OCI-LY7 (cell line): ENCODE measurements at regions of chr1 and their contacts with region 1.

Region 1: GRCh38 chr1:86395771-86396497 is at the start of gene ODF2L:
- DNase-seq: peak; percentile 88
- H3K4me3 ChIP-seq: peak within 1 kb of the TSS; percentile 83
- H3K27ac ChIP-seq: peak within 1 kb of the TSS; percentile 74
- H3K4me1 ChIP-seq: peaks cover 28% of the 10 kb centered on the region
- CTCF ChIP-seq: no peak
- total RNA-seq, gene ODF2L: 24.7 and 26.2 TPM in 2 replicates

Region 2: DNA sequence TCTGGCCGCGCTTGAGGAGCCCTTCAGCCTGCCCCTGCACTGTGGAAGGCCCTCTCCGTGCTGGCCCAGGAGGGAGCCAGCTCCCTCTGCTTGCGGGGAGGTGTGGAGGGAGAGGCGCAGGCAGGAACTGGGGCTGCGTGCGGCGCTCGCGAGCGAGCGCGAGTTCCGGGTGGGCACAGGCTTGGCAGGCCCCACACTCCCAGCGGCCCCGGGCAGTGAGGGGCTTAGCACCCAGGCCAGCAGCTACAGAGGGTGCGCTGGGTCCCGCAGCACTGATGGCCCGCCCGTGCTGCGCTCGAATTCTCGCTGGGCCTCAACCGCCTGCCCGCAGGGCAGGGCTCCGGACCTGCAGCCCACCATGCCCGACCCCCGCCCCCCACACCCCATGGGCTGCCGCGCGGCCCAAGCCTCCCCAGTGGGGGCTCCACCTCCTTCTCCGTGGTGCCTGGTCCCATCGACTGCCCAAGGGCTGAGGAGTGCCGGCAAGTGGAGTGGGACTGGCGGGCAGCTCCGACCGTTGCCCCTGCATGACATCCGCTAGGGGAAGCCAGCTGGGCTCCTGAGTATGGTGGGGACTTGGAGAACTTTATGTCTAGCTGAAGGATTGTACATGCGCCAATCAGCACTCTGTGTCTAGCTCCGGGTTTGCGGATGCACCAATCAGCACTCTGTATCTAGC is 285.3 kb before region 1 on chr1:
- CTCF ChIA-PET with region 1: no interaction called
- POLR2A ChIA-PET with region 1: no interaction called
- intact Hi-C with region 1: no loop called
- DNase-seq: no peak
- H3K4me3 ChIP-seq: no peak overlapping the region
- H3K27ac ChIP-seq: no peak overlapping the region
- H3K4me1 ChIP-seq: no peaks in the 10 kb centered on the region
- CTCF ChIP-seq: no peak

Region 3: GRCh38 chr1:86409416-86410021 is 13.6 kb after region 1 on chr1:
- CTCF ChIA-PET with region 1: no interaction called
- POLR2A ChIA-PET with region 1: interaction called, 11 read pairs
- intact Hi-C with region 1: no loop called
- DNase-seq: no peak
- H3K4me3 ChIP-seq: no peak overlapping the region
- H3K27ac ChIP-seq: no peak overlapping the region
- H3K4me1 ChIP-seq: no peaks in the 10 kb centered on the region
- CTCF ChIP-seq: no peak